ENCODE measurements at regions of chr14 and their contacts with region 1.

Region 1: DNA sequence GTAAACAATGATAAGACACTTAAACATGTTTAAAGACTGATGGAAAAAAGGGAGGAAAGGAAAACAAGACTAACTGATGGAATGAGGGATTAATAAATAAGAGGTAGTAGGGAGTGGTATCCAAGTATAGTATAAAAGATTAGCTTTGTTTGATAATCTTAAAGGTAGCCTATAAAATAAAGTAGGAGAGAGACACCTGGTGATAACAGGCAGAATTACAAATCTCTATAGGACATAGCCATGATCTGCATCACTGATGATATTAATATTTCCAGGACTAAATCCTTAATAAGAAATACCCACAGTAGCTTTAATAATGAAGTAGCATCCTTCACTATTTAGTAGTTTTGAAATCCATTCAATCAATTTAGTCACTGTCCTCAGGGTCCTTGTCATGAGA is 30.4 kb downstream of the DLGAP5 start:
- DNase-seq: no peak
- H3K4me3 ChIP-seq: no peak overlapping the region
- H3K27ac ChIP-seq: no peak overlapping the region
- H3K27me3 ChIP-seq: no peaks in the 10 kb centered on the region
- CTCF ChIP-seq: peak; percentile 64

Region 2: GRCh38 chr14:55071870-55072640 is 88.9 kb before region 1 on chr14:
- CTCF ChIA-PET with region 1: interaction called, 14 read pairs
- POLR2A ChIA-PET with region 1: no interaction called
- DNase-seq: no peak
- H3K4me3 ChIP-seq: no peak overlapping the region
- H3K27ac ChIP-seq: peak overlapping the region; percentile 66
- H3K27me3 ChIP-seq: no peaks in the 10 kb centered on the region
- CTCF ChIP-seq: no peak

Region 3: GRCh38 chr14:55088356-55088755 is 72.6 kb before region 1 on chr14:
- CTCF ChIA-PET with region 1: interaction called, 88 read pairs
- POLR2A ChIA-PET with region 1: interaction called, 6 read pairs
- DNase-seq: no peak
- H3K4me3 ChIP-seq: no peak overlapping the region
- H3K27ac ChIP-seq: no peak overlapping the region
- H3K27me3 ChIP-seq: no peaks in the 10 kb centered on the region
- CTCF ChIP-seq: no peak

Region 4: GRCh38 chr14:55180434-55180833 is 19.4 kb after region 1 on chr14:
- CTCF ChIA-PET with region 1: interaction called, 13 read pairs
- POLR2A ChIA-PET with region 1: no interaction called
- DNase-seq: no peak
- H3K4me3 ChIP-seq: no peak overlapping the region
- H3K27ac ChIP-seq: no peak overlapping the region
- H3K27me3 ChIP-seq: no peaks in the 10 kb centered on the region
- CTCF ChIP-seq: no peak

Measured in AG04450 (cell line).